SK-N-SH (cell line): ENCODE measurements at regions of chr2 and their contacts with region 1.

Region 1: DNA sequence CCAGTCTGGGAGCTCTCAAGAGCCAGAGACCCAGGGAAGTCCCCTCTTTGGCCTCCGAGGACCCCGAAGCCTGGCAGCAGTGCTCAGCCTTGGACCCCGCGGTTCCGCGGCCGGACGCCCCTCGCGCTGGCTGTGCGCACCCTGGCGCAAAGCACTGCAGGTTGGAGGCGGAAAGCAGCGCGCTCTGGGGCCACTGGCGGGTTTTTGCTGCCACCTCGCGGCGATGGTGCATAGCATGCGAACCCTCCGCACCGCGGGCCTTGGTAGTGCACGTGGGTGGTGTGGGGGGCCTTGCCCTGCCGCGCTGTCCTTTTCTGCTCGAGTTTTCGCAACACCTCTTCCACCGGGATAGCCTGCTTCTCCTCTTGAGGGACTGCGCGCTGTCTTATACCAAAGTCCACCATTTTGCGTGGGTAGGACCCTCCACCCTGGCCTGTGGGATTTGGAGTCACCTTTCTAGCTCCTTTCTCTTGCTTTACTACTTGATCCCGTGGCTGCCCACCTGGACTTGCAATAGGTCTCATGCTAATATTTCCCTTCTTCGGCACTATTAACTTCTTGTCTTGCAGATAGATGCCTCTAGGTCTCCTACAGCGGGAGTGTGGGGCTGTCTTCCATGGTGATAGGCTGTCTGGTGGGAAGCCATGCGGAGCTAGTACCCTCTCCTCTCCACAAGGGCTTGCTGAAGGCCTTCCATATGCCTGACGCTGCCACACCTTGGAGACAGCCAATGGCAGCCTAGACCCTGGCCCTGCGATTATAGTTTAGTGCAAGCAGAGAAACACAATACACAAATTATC is 14.3 kb downstream of the SIX3 start:
- DNase-seq: peak; percentile 94
- H3K4me3 ChIP-seq: peak overlapping the region; percentile 38; a peak in 3 of 4 replicates
- H3K27ac ChIP-seq: no peak overlapping the region
- H3K4me1 ChIP-seq: peaks cover 0 to 17% of the 10 kb centered on the region in 2 experiments; a peak in 1 of 4 replicates
- H3K27me3 ChIP-seq: no peaks in the 10 kb centered on the region
- CTCF ChIP-seq: peak; percentile 94
- EP300 ChIP-seq: no peak
- RAD21 ChIP-seq: peak; percentile 99

Region 2: DNA sequence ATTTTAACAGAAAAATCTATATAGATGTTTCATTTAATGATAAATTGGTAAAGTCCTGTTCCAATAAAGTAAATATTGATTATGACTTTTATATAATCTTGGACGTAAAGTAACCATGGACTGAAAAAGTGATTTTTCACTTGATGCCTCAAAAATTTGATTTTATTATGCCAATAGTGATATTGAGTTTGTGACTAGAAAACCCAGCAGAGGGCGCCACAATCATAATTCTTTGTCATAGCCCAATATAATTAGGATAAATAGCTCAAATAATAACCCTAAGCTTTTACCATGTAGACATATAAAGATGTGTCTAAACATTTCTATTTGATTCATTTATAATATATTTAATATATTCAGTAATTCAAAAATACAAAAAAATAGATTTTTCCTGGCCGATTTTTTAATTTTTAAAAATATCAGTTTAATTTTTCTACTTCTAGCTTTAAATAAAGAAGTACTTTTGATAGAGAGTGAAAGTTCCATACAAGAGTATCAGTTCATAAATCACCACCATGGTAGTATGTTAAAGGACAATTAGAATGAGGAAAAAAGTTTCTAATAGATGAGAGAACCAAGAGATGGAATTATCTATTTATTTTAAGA is 563.4 kb before region 1 on chr2:
- CTCF ChIA-PET with region 1: interaction called, 299 read pairs
- POLR2A ChIA-PET with region 1: interaction called, 3 read pairs
- DNase-seq: peak; percentile 41
- H3K4me3 ChIP-seq: peak overlapping the region in 1 of 2 experiments; percentile 24; a peak in 1 of 4 replicates
- H3K27ac ChIP-seq: no peak overlapping the region
- H3K4me1 ChIP-seq: peaks cover 0 to 4% of the 10 kb centered on the region in 2 experiments; a peak in 2 of 4 replicates
- H3K27me3 ChIP-seq: no peaks in the 10 kb centered on the region
- CTCF ChIP-seq: peak; percentile 91
- EP300 ChIP-seq: no peak
- RAD21 ChIP-seq: peak; percentile 86

Region 3: DNA sequence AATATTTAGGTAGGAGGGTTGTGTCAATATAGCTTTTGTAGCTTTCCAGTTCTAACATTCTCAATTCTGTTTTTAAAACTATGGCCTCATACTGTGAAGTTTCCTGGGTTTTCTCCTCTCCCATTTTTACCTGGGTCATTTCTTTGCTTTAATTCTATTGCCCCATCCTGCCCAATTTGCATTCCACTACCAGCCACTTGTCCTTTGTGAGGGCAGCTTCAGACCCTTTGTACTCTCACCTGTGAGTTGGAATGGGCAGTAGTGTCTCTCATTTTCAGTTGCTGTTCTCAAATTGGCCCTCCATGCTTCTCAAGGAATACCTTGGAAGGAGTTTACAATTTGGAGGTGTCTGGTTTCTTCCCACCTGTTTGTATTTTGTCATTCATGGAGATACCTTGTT is 485.6 kb before region 1 on chr2:
- CTCF ChIA-PET with region 1: interaction called, 581 read pairs
- POLR2A ChIA-PET with region 1: no interaction called
- DNase-seq: no peak
- H3K4me3 ChIP-seq: no peak overlapping the region
- H3K27ac ChIP-seq: no peak overlapping the region
- H3K4me1 ChIP-seq: no peaks in the 10 kb centered on the region
- H3K27me3 ChIP-seq: no peaks in the 10 kb centered on the region
- CTCF ChIP-seq: no peak
- EP300 ChIP-seq: no peak
- RAD21 ChIP-seq: no peak

Region 4: GRCh38 chr2:44560352-44560751 is 395.4 kb before region 1 on chr2:
- CTCF ChIA-PET with region 1: interaction called, 52 read pairs
- POLR2A ChIA-PET with region 1: no interaction called
- DNase-seq: no peak
- H3K4me3 ChIP-seq: no peak overlapping the region
- H3K27ac ChIP-seq: no peak overlapping the region
- H3K4me1 ChIP-seq: peaks cover 0 to under 1% of the 10 kb centered on the region in 2 experiments; a peak in 2 of 4 replicates
- H3K27me3 ChIP-seq: no peaks in the 10 kb centered on the region
- CTCF ChIP-seq: peak; percentile 56
- EP300 ChIP-seq: no peak
- RAD21 ChIP-seq: peak; percentile 63

Region 5: GRCh38 chr2:44715671-44716081 is 240.1 kb before region 1 on chr2:
- CTCF ChIA-PET with region 1: interaction called, 48 read pairs
- POLR2A ChIA-PET with region 1: interaction called, 3 read pairs
- DNase-seq: peak; percentile 46
- H3K4me3 ChIP-seq: no peak overlapping the region
- H3K27ac ChIP-seq: peak overlapping the region in 1 of 2 experiments; percentile 31; a peak in 2 of 4 replicates
- H3K4me1 ChIP-seq: peaks cover 0 to 22% of the 10 kb centered on the region in 2 experiments; a peak in 2 of 4 replicates
- H3K27me3 ChIP-seq: no peaks in the 10 kb centered on the region
- CTCF ChIP-seq: peak; percentile 63
- EP300 ChIP-seq: 0 out of 4 replicates have a peak, but pooled peaks of 1 of the 2 experiments have one; percentile 36
- RAD21 ChIP-seq: peak; percentile 95

Region 6: DNA sequence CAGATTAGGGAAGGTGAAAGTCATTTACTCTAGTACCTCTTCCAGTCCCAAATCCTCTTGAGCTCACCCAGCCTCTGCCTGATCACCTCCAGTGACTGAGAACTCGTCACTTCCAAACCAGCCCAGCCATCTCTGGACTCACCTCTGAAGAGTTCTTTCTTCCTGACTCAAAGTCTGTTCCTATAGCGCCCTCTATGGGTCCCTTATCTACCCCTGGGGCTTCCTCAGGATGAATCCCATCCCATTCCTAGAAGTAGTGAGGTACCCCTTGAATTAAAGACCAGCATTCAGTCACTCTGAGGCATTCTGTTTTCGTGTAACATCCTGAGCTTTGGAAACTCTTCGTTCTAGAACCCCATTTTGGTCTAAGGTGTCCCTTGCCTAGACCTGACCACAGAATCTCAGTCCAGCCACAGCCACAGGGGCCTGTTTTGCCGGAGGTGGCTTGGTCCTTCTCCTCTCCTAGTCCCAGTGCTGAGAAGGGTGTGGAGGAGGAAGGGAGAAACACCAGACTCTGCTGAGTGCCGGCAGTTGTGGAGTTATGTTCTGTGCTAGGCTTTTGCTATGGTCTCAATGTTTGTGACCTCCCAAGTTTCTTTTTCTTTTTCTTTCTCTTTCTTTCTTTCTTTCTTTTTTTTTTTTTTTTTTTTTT is 18.4 kb after region 1 on chr2:
- CTCF ChIA-PET with region 1: interaction called, 127 read pairs
- POLR2A ChIA-PET with region 1: interaction called, 3 read pairs
- DNase-seq: peak; percentile 83
- H3K4me3 ChIP-seq: no peak overlapping the region
- H3K27ac ChIP-seq: no peak overlapping the region
- H3K4me1 ChIP-seq: peaks cover 0 to 7% of the 10 kb centered on the region in 2 experiments; a peak in 1 of 4 replicates
- H3K27me3 ChIP-seq: no peaks in the 10 kb centered on the region
- CTCF ChIP-seq: peak; percentile 70
- EP300 ChIP-seq: no peak
- RAD21 ChIP-seq: peak; percentile 90

Region 7: GRCh38 chr2:45009303-45009927 is 53.6 kb after region 1 on chr2 and contains the start of gene SIX2:
- CTCF ChIA-PET with region 1: no interaction called
- POLR2A ChIA-PET with region 1: no interaction called
- DNase-seq: peak; percentile 99
- H3K4me3 ChIP-seq: peak within 1 kb of the TSS; percentile 55 to 62
- H3K27ac ChIP-seq: peak within 1 kb of the TSS; percentile 17 to 72; a peak in 3 of 4 replicates
- H3K4me1 ChIP-seq: peaks cover 0 to 15% of the 10 kb centered on the region in 2 experiments; a peak in 1 of 4 replicates
- H3K27me3 ChIP-seq: no peaks in the 10 kb centered on the region
- CTCF ChIP-seq: no peak
- EP300 ChIP-seq: peak in 1 of 2 experiments; percentile 64; a peak in 1 of 4 replicates
- RAD21 ChIP-seq: no peak
- polyA plus RNA-seq, gene SIX2: 0.45 and 0.76 TPM in 2 replicates